ENCODE measurements at regions of chr17 and their contacts with region 1.

Region 1: GRCh38 chr17:29116804-29117772 is 63.1 kb downstream of the MYO18A start:
- DNase-seq: peak; percentile 61
- H3K4me3 ChIP-seq: no peak overlapping the region
- H3K27ac ChIP-seq: no peak overlapping the region
- H3K4me1 ChIP-seq: no peaks in the 10 kb centered on the region
- H3K27me3 ChIP-seq: no peaks in the 10 kb centered on the region
- CTCF ChIP-seq: peak; percentile 85 to 93
- POLR2A ChIP-seq: no peak

Region 2: DNA sequence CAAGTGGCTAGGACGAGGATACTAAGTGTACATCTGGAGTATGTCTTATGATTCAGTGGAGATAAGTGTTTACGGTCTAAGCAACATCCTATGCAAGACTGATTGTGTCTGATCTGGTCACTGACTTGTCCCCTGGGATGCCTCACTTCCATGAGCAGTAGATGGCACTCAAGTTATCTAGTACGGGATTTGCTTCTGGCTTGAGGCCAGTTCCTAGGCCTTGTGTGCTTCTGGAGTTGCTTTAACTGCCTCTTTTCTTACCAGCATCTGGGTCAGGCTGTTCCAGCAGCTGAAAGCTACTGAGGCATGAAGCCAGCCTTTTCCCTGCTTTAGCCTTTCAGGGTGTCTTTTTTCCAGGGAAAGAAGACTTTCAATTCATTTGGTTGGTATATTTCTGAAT is 432.1 kb before region 1 on chr17:
- CTCF ChIA-PET with region 1: no interaction called
- POLR2A ChIA-PET with region 1: no interaction called
- dilution Hi-C with region 1: no loop called
- intact Hi-C with region 1: no loop called
- DNase-seq: no peak
- H3K4me3 ChIP-seq: no peak overlapping the region
- H3K27ac ChIP-seq: no peak overlapping the region
- H3K4me1 ChIP-seq: no peaks in the 10 kb centered on the region
- H3K27me3 ChIP-seq: no peaks in the 10 kb centered on the region
- CTCF ChIP-seq: no peak
- POLR2A ChIP-seq: no peak

Region 3: DNA sequence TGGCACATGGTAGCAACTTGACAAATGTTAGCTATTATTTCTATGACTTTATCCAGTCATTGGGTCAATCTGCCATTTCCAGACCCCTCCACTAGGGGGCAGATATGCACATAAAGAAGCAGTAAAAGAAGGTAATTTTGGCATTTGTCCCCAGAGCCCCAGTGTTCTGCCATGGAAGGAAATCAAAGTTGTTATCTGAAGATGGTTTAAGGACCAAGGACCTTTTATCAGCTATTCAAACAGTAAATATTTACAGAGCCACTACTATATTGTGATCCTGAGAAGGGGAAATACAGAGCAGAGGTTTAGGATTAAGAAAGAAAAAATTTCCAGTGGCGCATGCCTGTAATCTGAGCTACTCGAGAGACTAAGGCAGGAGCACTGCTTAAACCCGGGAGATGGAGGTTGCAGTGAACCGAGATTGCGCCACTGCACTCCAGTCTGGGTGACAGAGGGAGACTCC is 353.3 kb before region 1 on chr17:
- CTCF ChIA-PET with region 1: interaction called, 10 read pairs
- POLR2A ChIA-PET with region 1: no interaction called
- dilution Hi-C with region 1: no loop called
- intact Hi-C with region 1: no loop called
- DNase-seq: peak; percentile 79
- H3K4me3 ChIP-seq: no peak overlapping the region
- H3K27ac ChIP-seq: no peak overlapping the region
- H3K4me1 ChIP-seq: peaks cover 16% of the 10 kb centered on the region
- H3K27me3 ChIP-seq: no peaks in the 10 kb centered on the region
- CTCF ChIP-seq: peak; percentile 66 to 75
- POLR2A ChIP-seq: no peak

Region 4: DNA sequence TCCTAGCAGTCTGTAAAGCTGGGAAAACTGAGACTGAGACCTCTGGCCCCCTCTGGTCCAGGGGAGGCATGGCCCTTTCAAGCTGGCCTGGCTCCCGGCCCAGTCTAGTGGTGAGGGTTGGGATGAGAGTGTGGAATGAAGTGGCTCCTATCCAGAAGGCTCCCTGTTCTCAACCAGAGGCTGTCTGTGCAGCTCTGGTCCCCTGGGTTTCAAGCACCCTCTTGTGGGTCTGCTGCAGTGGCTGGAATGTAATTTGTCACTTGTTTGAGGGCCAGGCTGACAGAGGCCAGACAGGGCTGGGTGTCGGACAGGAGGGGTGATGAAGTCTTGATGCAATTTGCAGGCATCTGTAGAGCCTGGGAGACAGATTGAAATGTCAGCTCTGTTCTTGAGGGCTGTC is 143.7 kb before region 1 on chr17:
- CTCF ChIA-PET with region 1: interaction called, 84 read pairs
- POLR2A ChIA-PET with region 1: no interaction called
- dilution Hi-C with region 1: no loop called
- intact Hi-C with region 1: no loop called
- DNase-seq: no peak
- H3K4me3 ChIP-seq: no peak overlapping the region
- H3K27ac ChIP-seq: no peak overlapping the region
- H3K4me1 ChIP-seq: no peaks in the 10 kb centered on the region
- H3K27me3 ChIP-seq: no peaks in the 10 kb centered on the region
- CTCF ChIP-seq: no peak
- POLR2A ChIP-seq: no peak

Region 5: GRCh38 chr17:29048440-29049368 is 68.4 kb before region 1 on chr17:
- CTCF ChIA-PET with region 1: interaction called, 13 read pairs
- POLR2A ChIA-PET with region 1: no interaction called
- dilution Hi-C with region 1: no loop called
- intact Hi-C with region 1: no loop called
- DNase-seq: no peak
- H3K4me3 ChIP-seq: no peak overlapping the region
- H3K27ac ChIP-seq: no peak overlapping the region
- H3K4me1 ChIP-seq: no peaks in the 10 kb centered on the region
- H3K27me3 ChIP-seq: peaks cover 19 to 22% of the 10 kb centered on the region in 2 experiments
- CTCF ChIP-seq: no peak
- POLR2A ChIP-seq: no peak

Region 6: DNA sequence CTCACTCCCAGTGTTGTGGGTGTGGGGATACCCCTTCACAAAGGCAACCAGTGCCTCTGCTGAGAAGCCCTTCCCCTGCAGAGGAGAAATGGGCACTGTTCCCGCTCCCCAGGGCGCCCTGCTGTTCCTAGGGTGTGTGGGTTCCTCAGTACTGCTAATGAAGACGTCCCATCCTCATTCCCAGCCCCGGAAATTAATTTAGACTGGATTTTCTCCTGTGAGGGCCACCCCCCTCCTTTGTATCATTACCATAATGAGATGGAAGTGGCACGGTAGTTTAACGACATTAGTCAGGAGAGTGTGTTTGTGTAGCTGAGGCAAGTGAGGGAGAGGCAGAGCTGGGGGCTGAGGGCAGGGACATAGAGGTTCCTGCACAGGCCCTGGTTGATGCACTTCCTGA is 21.0 kb before region 1 on chr17:
- CTCF ChIA-PET with region 1: interaction called, 26 read pairs
- POLR2A ChIA-PET with region 1: no interaction called
- dilution Hi-C with region 1: no loop called
- intact Hi-C with region 1: no loop called
- DNase-seq: no peak
- H3K4me3 ChIP-seq: no peak overlapping the region
- H3K27ac ChIP-seq: no peak overlapping the region
- H3K4me1 ChIP-seq: no peaks in the 10 kb centered on the region
- H3K27me3 ChIP-seq: no peaks in the 10 kb centered on the region
- CTCF ChIP-seq: no peak
- POLR2A ChIP-seq: no peak

Region 7: DNA sequence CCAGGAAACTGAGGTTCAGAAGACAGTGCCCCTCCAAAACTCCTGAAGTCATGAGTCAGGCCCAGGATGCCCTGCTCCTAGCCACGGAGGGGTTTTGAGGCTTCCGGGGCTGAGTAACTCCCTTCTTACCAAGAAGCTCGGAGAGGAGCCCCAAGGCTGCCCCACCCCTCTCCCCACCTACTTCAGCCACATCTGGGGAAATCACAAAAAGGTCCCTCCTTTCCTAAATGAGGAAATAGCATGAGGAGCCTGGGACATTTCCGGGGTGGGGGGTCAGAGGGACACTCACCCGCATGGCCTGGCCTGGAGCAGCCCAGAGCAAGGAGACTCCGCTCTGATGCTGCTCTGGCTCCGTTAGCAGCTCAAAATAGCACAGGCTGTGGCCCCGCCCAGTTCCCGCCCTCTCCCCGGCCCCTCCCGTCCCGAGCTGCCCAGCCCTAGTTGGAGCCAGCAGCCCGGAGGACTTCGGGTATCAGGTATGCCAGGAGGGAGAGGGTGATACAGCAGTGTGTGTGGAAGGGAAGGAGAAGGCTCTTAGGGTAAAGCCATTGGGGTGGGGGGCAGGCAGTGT is 23.0 kb after region 1 on chr17:
- CTCF ChIA-PET with region 1: interaction called, 29 read pairs
- POLR2A ChIA-PET with region 1: no interaction called
- dilution Hi-C with region 1: no loop called
- intact Hi-C with region 1: no loop called
- DNase-seq: peak; percentile 54
- H3K4me3 ChIP-seq: peak overlapping the region in 1 of 3 experiments; percentile 4
- H3K27ac ChIP-seq: no peak overlapping the region
- H3K4me1 ChIP-seq: peaks cover 27% of the 10 kb centered on the region
- H3K27me3 ChIP-seq: no peaks in the 10 kb centered on the region
- CTCF ChIP-seq: no peak
- POLR2A ChIP-seq: no peak

Region 8: GRCh38 chr17:29293890-29294579 is 176.9 kb after region 1 on chr17 and contains the start of gene NUFIP2:
- CTCF ChIA-PET with region 1: interaction called, 12 read pairs
- POLR2A ChIA-PET with region 1: no interaction called
- dilution Hi-C with region 1: no loop called
- intact Hi-C with region 1: no loop called
- DNase-seq: peak; percentile 99
- H3K4me3 ChIP-seq: peak within 1 kb of the TSS; percentile 70 to 95 (median 78)
- H3K27ac ChIP-seq: peak within 1 kb of the TSS; percentile 82
- H3K4me1 ChIP-seq: peaks cover 30% of the 10 kb centered on the region
- H3K27me3 ChIP-seq: no peaks in the 10 kb centered on the region
- CTCF ChIP-seq: no peak
- POLR2A ChIP-seq: peak; percentile 100
- total RNA-seq, gene NUFIP2: 51.1 and 60.7 TPM in 2 replicates